IMR-90 (cell line): ENCODE measurements at regions of chr3 and their contacts with region 1.

Region 1: DNA sequence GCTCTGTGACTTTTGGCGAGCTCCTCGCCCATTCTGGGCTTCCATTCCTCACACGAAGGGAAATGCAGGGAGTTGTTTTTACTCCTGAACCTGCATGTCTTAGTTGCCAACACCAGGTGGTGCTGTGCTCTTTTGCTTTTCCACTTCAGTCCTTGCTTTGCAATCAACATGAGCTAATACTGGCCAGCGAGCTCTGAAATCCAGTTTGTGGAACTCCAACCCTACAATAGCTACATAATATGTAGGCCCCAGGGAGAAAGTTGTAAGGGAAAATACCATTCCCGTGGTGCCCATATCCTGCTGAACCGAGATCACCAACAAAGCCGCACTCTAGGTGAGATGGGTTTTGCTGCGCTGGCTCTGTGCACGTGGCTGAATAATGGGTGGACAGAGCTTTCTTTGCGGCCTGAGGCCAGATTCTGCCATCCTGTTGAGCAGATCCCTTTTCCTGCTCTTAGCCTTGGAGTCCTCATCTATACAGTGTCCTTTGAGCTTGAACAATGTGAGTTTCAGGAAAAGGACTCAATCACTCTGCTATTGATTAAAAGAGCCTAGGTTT is 25.0 kb downstream of the LSM3 start:
- DNase-seq: peak; percentile 87
- ATAC-seq: peak; percentile 80
- H3K4me3 ChIP-seq: no peak overlapping the region
- H3K27ac ChIP-seq: peak overlapping the region; percentile 70; the same call in 1 of the 2 replicates
- H3K4me1 ChIP-seq: peaks cover 34% of the 10 kb centered on the region
- H3K27me3 ChIP-seq: no peaks in the 10 kb centered on the region
- CTCF ChIP-seq: peak; percentile 87
- POLR2A ChIP-seq: no peak
- RAD21 ChIP-seq: peak; percentile 94

Region 2: DNA sequence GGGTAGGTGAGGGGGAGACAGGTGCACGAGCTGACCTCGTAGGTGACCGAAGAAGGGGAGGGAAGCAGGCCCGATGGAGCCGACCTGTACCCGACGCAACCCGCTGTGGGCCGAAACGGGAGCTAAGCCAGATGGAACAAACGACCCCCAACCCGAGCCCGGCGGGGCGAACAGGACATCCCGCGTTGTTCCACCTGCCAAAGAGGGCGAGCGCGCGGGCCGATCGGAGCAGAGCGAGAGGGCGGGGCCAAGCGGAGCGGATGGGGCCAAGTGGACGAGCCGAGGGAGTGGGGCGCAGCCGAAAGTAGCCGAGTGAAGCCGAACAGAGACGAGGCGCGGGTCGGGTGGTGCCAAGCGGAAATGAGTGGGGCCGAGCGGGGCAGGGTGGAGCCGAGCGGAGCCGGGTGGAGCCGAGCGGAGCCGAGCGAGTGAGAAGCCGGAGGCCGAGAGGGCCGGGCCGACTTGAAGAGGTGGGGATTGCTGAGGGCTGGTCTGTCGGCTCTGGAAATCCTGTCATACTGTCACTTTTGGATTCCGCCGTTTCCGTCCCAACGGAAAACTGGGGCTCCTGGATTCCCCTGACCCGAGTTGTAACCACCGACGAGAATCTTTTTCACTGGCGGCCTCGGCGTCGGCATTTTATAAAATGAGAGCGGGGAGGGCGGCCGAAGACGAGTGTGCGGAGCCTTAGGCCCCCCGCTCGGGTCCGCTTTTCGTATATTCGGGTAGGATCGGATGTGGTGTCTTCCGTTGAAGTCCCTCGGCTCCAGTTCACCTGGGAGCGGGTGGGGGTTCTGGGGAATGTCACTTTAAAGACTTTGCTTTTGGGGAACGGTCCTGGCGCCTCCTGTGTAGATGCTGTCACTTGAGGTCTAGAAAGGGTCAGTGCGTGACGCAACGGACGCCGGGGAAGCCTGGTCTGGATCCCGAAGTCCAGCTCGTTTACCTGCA is 308.2 kb before region 1 on chr3:
- CTCF ChIA-PET with region 1: no interaction called
- POLR2A ChIA-PET with region 1: no interaction called
- dilution Hi-C with region 1: no loop called
- in situ Hi-C with region 1: no loop called
- intact Hi-C with region 1: loop called (anchors 2 kb)
- DNase-seq: peak; percentile 71
- ATAC-seq: peak; percentile 100
- H3K4me3 ChIP-seq: peak overlapping the region; percentile 78
- H3K27ac ChIP-seq: peak overlapping the region; percentile 60; the same call in 1 of the 2 replicates
- H3K4me1 ChIP-seq: peaks cover 7% of the 10 kb centered on the region
- H3K27me3 ChIP-seq: peaks cover 10% of the 10 kb centered on the region; the same call in 1 of the 2 replicates
- CTCF ChIP-seq: no peak
- POLR2A ChIP-seq: no peak
- RAD21 ChIP-seq: no peak

Region 3: GRCh38 chr3:14393440-14394111 is 190.0 kb after region 1 on chr3:
- CTCF ChIA-PET with region 1: interaction called, 6 read pairs
- POLR2A ChIA-PET with region 1: no interaction called
- dilution Hi-C with region 1: no loop called
- in situ Hi-C with region 1: no loop called
- intact Hi-C with region 1: loop called (anchors 1 kb)
- DNase-seq: peak; percentile 41
- ATAC-seq: peak; percentile 93
- H3K4me3 ChIP-seq: no peak overlapping the region
- H3K27ac ChIP-seq: peak overlapping the region; percentile 64; the same call in 1 of the 2 replicates
- H3K4me1 ChIP-seq: peaks cover 18% of the 10 kb centered on the region
- H3K27me3 ChIP-seq: no peaks in the 10 kb centered on the region
- CTCF ChIP-seq: peak; percentile 39
- POLR2A ChIP-seq: no peak
- RAD21 ChIP-seq: peak; percentile 33

Region 4: GRCh38 chr3:14461748-14462324 is 258.2 kb after region 1 on chr3:
- CTCF ChIA-PET with region 1: interaction called, 15 read pairs
- POLR2A ChIA-PET with region 1: no interaction called
- dilution Hi-C with region 1: no loop called
- in situ Hi-C with region 1: loop called (anchors 5 kb)
- intact Hi-C with region 1: loop called (anchors 1 kb)
- DNase-seq: peak; percentile 73
- ATAC-seq: peak; percentile 61
- H3K4me3 ChIP-seq: no peak overlapping the region
- H3K27ac ChIP-seq: peak overlapping the region; percentile 21; the same call in 1 of the 2 replicates
- H3K4me1 ChIP-seq: peaks cover 11% of the 10 kb centered on the region; the same call in 1 of the 2 replicates
- H3K27me3 ChIP-seq: no peaks in the 10 kb centered on the region
- CTCF ChIP-seq: peak; percentile 98
- POLR2A ChIP-seq: no peak
- RAD21 ChIP-seq: peak; percentile 88

Region 5: GRCh38 chr3:14548321-14548729 is 344.7 kb after region 1 on chr3:
- CTCF ChIA-PET with region 1: interaction called, 7 read pairs
- POLR2A ChIA-PET with region 1: no interaction called
- dilution Hi-C with region 1: no loop called
- in situ Hi-C with region 1: loop called (anchors 10 kb)
- intact Hi-C with region 1: loop called (anchors 1 kb)
- DNase-seq: peak; percentile 56
- ATAC-seq: peak; percentile 92
- H3K4me3 ChIP-seq: no peak overlapping the region
- H3K27ac ChIP-seq: no peak overlapping the region
- H3K4me1 ChIP-seq: no peaks in the 10 kb centered on the region
- H3K27me3 ChIP-seq: peaks cover 33% of the 10 kb centered on the region
- CTCF ChIP-seq: peak; percentile 70
- POLR2A ChIP-seq: no peak
- RAD21 ChIP-seq: peak; percentile 75